ENCODE measurements at regions of chr19 and their contacts with region 1.

Region 1: GRCh38 chr19:4007021-4007835 is at the start of gene PIAS4:
- DNase-seq: peak; percentile 88 to 99 (median 94)
- ATAC-seq: peak; percentile 90 to 91
- H3K4me3 Mint-ChIP-seq: peak within 1 kb of the TSS; percentile 79 to 93 (median 87)
- H3K27ac Mint-ChIP-seq: peak within 1 kb of the TSS; percentile 71 to 91 (median 85)
- H3K4me1 Mint-ChIP-seq: peaks cover 11 to 39% (median 29%) of the 10 kb centered on the region in 4 donors
- H3K27me3 Mint-ChIP-seq: no peaks in the 10 kb centered on the region
- polyA plus RNA-seq, gene PIAS4: 3.2 to 4.9 (median 4.5) TPM

Region 2: DNA sequence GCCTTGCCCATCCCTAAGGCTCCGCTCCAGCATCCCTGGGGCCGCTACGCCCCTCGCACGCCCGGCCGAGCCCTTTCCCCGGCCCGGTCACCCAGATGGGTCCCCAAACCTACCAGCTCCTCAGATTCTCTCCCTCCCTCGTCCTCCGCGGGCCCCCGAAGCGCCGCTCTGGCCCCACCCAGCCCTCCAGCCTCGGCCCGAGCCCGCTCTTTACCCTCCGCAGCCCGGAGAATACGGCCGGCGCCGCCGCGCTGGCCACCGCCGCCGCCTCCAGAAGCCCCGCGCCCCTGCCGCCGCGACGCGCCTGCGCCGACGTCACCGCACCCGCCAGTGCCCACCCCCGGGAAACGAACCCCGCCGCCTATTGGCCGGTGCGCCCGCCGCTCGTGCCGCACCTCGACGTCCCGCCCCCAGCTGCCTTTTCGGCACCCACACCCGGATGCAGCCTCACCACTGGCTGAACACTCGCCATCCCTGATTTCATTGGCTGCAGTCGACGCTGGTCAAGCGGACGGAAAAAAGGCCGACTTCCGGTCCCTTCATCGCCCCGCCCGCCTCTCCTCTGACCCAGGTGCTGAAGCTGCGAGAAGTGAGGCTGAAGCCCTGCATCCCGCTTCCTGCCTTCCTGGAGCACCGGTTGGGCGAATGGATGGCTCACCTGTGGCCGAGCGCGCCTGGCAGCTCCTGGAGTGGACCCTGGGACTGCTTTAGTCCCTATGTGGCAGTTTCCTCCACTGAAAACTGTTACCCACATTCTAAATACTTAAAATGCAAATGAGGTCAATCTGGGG is 36.2 kb before region 1 on chr19 and contains the start of gene DAPK3:
- POLR2A ChIA-PET with region 1: interaction called, 10 read pairs
- DNase-seq: peak; percentile 79 to 92 (median 88)
- ATAC-seq: peak; percentile 89 to 91
- H3K4me3 Mint-ChIP-seq: peak within 1 kb of the TSS; percentile 83 to 93 (median 88)
- H3K27ac Mint-ChIP-seq: peak within 1 kb of the TSS; percentile 60 to 96 (median 90)
- H3K4me1 Mint-ChIP-seq: peaks cover 16 to 38% (median 23%) of the 10 kb centered on the region in 4 donors
- H3K27me3 Mint-ChIP-seq: no peaks in the 10 kb centered on the region
- polyA plus RNA-seq, gene DAPK3: 17.7 to 27.7 (median 24.1) TPM

Region 3: GRCh38 chr19:3984908-3985642 is 22.2 kb before region 1 on chr19 and contains the start of gene EEF2:
- POLR2A ChIA-PET with region 1: interaction called, 46 read pairs
- DNase-seq: peak; percentile 84 to 97 (median 92)
- ATAC-seq: peak; percentile 57 to 64
- H3K4me3 Mint-ChIP-seq: peak within 1 kb of the TSS; percentile 92 to 99 (median 97)
- H3K27ac Mint-ChIP-seq: peak within 1 kb of the TSS; percentile 92 to 98 (median 97)
- H3K4me1 Mint-ChIP-seq: peaks cover 14 to 67% (median 49%) of the 10 kb centered on the region in 4 donors
- H3K27me3 Mint-ChIP-seq: no peaks in the 10 kb centered on the region
- polyA plus RNA-seq, gene EEF2: 546 to 682 (median 600) TPM

Region 4: GRCh38 chr19:4103073-4103418 is 95.8 kb after region 1 on chr19:
- POLR2A ChIA-PET with region 1: interaction called, 13 read pairs
- DNase-seq: no peak
- ATAC-seq: no peak
- H3K4me3 Mint-ChIP-seq: no peak overlapping the region
- H3K27ac Mint-ChIP-seq: peak overlapping the region in 1 of 10 donors; percentile 95
- H3K4me1 Mint-ChIP-seq: peaks cover 21 to 42% (median 36%) of the 10 kb centered on the region in 4 donors
- H3K27me3 Mint-ChIP-seq: no peaks in the 10 kb centered on the region

Region 5: DNA sequence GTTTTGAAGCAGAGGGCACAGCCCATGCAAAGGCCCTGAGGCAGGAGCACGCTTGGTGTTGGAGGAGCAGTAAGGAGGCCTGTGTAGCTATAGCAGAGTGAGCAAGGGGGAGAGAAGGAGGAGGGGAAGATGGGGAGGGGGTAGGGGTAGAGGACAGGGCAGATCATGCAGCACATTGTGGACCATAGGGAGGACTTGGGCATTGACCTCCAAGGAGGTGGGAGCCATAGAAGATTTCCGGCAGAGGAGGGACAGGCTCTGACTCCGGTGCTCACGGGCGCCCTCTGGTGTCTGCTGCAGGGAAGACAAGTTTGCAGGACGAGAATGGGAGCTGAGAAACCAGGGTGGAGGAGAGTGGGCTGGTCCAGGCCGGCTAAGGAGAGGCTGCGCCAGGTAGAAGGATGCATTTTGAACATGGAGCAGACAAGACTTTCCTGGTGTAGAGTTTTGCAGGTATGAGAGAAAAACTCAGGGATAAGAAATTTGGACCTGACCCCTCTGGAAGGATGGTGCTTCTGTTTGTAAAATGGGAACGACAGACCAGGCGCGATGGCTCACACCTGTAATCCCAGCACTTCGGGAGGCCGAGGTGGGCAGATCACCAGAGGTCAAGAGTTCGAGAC is 132.5 kb after region 1 on chr19:
- POLR2A ChIA-PET with region 1: interaction called, 18 read pairs
- DNase-seq: peak; percentile 69 to 91 (median 83)
- ATAC-seq: peak; percentile 91 to 95
- H3K4me3 Mint-ChIP-seq: peak overlapping the region in 7 of 10 donors; percentile 4 to 43 (median 20)
- H3K27ac Mint-ChIP-seq: peak overlapping the region in 6 of 10 donors; percentile 6 to 71 (median 32)
- H3K4me1 Mint-ChIP-seq: peaks cover 6 to 15% (median 12%) of the 10 kb centered on the region in 4 donors
- H3K27me3 Mint-ChIP-seq: peaks cover 0 to 6% (median 3%) of the 10 kb centered on the region in 5 donors

Region 6: DNA sequence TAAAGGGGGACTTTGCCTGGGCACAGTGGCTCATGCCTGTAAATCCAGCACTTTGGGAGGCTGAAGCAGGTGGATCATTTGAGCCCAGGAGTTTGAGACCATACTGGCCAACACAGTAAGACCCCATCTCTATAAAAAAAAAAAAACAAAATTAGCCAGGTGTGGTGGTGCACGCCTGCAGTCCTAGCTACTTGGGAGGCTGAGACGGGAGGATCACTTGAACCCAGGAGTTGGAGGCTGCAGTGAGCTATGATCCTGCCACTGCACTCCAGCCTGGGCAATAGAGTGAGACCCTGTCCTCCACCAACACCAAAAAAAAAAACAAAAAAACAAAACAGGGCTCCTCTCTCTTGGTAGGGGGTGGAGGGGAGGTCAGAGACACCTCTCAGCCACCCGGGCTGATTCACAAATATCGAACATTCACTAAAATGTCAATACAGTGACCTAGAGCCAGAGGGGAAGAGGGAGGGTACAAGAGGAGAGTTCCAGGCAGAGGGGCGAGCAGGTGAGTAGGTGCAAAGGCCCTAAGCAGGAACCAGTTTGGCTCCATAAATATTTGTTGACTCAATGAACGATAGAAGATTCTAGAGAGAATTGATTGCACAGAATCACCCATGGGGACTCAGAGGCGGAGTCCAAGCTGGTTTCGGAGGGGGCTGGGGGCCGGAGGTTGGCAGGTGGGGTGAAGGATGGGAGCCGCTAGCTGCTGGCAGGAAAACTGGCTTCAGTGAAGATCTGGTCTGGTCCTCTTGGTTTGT is 145.2 kb after region 1 on chr19:
- POLR2A ChIA-PET with region 1: no interaction called
- DNase-seq: no peak
- ATAC-seq: no peak
- H3K4me3 Mint-ChIP-seq: no peak overlapping the region
- H3K27ac Mint-ChIP-seq: no peak overlapping the region
- H3K4me1 Mint-ChIP-seq: peaks cover 0 to 2% (median under 1%) of the 10 kb centered on the region in 4 donors
- H3K27me3 Mint-ChIP-seq: peaks cover 0 to 11% (median 4%) of the 10 kb centered on the region in 5 donors

Measured in naive thymus-derived CD8-positive, alpha-beta T cell (primary cell).